Posterior vena cava (tissue), 2 donors: ENCODE measurements at regions of chr15 and their contacts with region 1.

Region 1: GRCh38 chr15:41577863-41578735 is 19.1 kb downstream of the TYRO3 start:
- DNase-seq: peak; percentile 70

Region 2: GRCh38 chr15:40593588-40594428 is 984.3 kb before region 1 on chr15 and contains the start of gene KNL1:
- intact Hi-C with region 1: no loop called
- DNase-seq: peak; percentile 95
- total RNA-seq, gene KNL1: 0.52 to 0.79 TPM

Region 3: DNA sequence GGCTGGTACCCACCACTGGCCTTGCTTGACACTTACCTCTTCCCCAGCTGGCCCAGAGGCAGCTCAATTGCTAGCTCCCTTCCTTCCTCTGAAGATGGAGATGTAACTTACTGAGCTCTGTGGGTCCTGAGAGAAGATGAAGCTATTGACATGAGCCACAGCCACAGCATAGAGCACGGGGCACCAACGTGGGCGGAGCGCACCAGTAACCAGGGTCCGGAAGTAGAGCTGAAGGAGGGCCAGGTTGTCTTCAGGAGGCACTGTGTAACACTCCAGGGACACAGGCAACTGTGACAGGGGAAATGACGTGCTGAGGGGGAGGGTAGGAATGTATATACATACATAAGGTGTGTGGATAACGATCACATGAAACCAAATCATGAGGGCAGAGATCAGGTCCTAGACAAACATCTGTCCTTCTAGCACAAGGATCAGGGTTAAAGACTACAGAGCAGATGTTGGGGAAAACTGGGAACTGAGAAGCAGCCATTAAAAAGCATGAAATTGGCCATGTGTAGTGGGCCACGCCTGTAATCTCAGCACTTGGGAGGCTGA is 60.1 kb before region 1 on chr15:
- intact Hi-C with region 1: loop called in 1 of 2 experiments (anchors 2 kb)
- DNase-seq: no peak